Activated CD8-positive, alpha-beta T cell treated with anti-CD3 and anti-CD28 coated beads for 36 hours (primary cell): ENCODE measurements at regions of chr10 and their contacts with region 1.

Region 1: DNA sequence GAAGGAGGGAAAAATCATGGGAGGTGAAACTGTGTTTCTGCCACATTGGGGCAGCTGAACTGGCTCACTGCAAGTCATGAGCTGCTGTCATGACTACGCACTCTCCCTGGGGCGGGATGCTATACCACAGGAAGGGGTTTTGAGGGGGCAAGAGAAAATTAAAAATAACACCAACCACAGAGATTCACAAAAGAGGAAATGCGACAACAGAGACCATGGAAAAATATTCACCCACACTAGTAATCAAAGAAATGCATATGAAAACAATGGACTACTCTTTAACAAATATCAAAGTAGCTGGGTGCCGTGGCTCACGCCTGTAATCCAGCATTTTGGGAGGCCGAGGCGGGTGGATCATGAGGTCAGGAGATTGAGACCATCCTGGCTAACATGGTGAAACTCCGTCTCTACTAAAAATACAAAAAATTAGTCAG is 65.2 kb upstream of the TM9SF3 start:
- DNase-seq: peak; percentile 79
- ATAC-seq: peak; percentile 79
- H3K4me3 Mint-ChIP-seq: peak overlapping the region; percentile 14
- H3K27ac Mint-ChIP-seq: peak overlapping the region; percentile 61
- H3K4me1 Mint-ChIP-seq: peaks cover 48% of the 10 kb centered on the region
- H3K27me3 Mint-ChIP-seq: no peaks in the 10 kb centered on the region
- CTCF ChIP-seq: no peak

Region 2: DNA sequence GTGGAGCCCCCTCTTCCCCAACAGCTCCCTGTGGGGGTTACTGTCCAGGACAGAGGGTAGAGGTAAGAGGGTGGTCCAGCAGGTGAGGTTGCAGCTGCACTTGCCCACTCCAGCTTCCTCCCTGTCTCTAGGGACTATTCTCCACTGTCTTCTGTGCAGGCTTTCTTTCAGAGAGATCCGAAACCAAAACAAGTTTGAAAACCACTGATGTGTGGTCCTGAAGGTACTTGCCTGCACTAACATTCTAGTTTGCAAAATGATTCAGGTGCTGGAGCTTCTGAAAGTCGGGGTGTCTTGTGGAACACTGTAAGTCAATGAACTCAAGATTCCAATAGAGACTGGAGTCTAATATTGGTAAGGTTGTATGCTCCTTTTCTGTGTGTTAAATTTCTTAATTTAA is 443.7 kb before region 1 on chr10:
- CTCF ChIA-PET with region 1: no interaction called
- POLR2A ChIA-PET with region 1: no interaction called
- intact Hi-C with region 1: no loop called
- DNase-seq: no peak
- ATAC-seq: no peak
- H3K4me3 Mint-ChIP-seq: no peak overlapping the region
- H3K27ac Mint-ChIP-seq: no peak overlapping the region
- H3K4me1 Mint-ChIP-seq: no peaks in the 10 kb centered on the region
- H3K27me3 Mint-ChIP-seq: peaks cover 2% of the 10 kb centered on the region
- CTCF ChIP-seq: no peak

Region 3: DNA sequence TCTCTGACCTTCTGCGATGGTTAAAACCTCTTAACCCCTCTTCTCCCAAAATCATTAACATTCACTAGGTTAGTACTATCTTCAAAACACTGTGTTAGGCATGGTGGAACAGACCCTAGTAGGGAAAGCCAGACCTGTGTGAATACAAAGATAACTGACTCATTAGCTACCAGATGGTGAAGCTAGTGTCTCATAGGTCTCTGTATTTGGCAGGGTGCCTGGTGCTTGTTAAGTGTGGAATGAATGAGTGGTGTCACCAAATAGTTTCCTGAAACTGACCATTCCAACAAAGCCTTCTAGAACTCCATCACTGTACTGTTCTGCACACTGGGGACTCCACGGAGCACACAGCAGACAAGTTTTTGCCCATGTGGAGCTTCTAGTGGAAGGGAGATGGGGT is 37.5 kb before region 1 on chr10:
- CTCF ChIA-PET with region 1: no interaction called
- POLR2A ChIA-PET with region 1: no interaction called
- intact Hi-C with region 1: no loop called
- DNase-seq: peak; percentile 17
- ATAC-seq: no peak
- H3K4me3 Mint-ChIP-seq: no peak overlapping the region
- H3K27ac Mint-ChIP-seq: no peak overlapping the region
- H3K4me1 Mint-ChIP-seq: peaks cover 9% of the 10 kb centered on the region
- H3K27me3 Mint-ChIP-seq: no peaks in the 10 kb centered on the region
- CTCF ChIP-seq: no peak

Region 4: DNA sequence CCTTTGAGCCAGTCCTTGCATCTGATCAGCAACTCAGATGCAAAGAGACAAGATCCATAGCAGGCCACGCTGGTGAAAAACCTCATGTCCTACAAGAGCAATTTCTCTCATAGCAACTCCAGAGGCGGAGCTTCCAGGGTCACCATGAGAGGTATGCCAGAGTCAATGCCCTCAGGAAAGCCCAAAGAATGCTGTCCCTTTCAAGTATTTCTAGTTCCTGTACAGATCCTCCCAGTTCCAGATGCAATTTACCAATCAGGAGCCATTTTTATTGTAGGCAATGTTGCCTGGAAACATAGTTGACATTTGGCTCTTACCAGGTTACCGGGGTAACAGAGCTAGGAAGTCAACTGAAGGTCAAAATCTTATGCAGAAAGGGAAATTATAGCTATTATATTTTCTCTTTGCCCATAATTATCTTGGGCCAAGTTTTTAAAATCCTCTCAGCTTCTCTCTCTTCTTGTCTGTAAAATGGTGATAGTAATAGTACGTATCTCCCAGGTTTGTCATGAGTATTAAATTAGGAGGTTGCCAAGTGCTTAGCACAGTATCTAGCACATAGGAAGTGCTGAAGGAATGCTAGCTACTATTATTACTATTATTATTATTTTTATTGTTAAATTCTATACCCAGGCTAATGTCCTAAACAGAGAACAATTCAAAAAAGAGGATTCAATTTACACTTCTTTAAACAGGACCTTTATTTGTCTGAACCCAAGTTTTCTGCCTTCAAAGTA is 18.9 kb before region 1 on chr10:
- CTCF ChIA-PET with region 1: no interaction called
- POLR2A ChIA-PET with region 1: no interaction called
- intact Hi-C with region 1: no loop called
- DNase-seq: no peak
- ATAC-seq: no peak
- H3K4me3 Mint-ChIP-seq: no peak overlapping the region
- H3K27ac Mint-ChIP-seq: no peak overlapping the region
- H3K4me1 Mint-ChIP-seq: no peaks in the 10 kb centered on the region
- H3K27me3 Mint-ChIP-seq: no peaks in the 10 kb centered on the region
- CTCF ChIP-seq: no peak

Region 5: DNA sequence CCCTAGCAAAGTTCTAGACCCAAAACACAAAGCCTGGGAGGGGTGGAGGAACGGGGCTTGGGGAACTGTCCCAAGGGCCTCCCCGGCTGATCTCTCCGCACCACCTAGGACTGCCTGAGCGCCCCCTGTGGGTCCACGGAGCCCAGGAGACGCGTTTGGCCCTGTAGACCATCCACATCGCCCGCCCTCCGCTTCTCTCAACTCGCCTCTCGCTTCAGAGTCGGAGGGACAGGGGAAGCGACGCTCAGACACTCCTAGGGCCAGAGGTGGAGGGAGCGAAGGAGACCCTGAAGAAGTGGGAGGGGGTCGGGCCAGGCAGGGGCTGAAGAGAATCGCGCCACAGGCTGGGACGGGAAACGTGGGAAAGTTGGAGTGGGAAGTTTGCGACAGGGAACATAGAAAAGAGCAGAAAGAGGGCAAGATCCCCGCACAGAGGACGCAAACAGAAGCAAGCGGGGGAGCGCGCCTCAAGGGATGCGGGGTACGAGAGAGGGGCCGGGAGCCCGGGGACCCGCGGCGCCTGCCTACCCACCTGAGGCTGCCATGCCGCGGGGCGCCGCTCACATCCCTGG is 67.9 kb after region 1 on chr10:
- CTCF ChIA-PET with region 1: interaction called, 3 read pairs
- POLR2A ChIA-PET with region 1: no interaction called
- intact Hi-C with region 1: loop called (anchors 5 kb)
- DNase-seq: peak; percentile 85
- ATAC-seq: peak; percentile 81
- H3K4me3 Mint-ChIP-seq: peak overlapping the region; percentile 81
- H3K27ac Mint-ChIP-seq: peak overlapping the region; percentile 80
- H3K4me1 Mint-ChIP-seq: peaks cover 24% of the 10 kb centered on the region
- H3K27me3 Mint-ChIP-seq: no peaks in the 10 kb centered on the region
- CTCF ChIP-seq: peak; percentile 72